Dorsolateral prefrontal cortex (tissue), 120 donors: ENCODE measurements at regions of chr5 and their contacts with region 1.

Region 1: DNA sequence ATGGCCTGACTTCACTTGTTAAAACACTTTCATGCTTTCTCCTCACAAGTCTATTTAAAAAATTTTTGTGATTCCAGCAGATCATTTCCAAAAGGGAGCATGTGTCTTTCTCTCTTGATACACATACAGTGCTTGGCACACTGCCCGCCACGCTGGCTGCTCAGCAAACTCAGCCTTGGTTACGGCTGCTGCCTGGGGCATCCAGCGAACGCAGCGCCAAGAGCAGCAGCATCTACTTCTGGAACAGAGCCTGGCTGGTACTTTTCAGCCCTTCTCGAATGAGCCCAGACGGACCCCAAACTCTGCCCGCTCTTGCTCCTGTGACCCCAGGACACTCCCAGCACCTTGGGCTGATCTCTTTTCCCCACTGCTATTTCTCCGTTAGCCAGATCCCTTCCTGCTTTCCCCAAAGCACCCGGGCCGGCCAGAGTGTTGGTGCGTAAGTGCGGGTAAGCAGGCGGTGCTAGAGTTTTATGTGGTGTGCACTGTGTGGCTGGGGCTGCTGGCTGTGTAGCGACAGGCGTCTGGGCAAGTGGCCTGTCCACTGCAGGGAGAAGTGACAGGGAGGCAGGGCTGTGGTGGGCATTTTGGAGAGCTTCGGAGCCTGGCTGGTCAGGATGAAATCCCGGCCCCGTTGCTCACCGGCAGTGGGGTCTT is 73.2 kb downstream of the SH3PXD2B start:
- DNase-seq: peak; percentile 84 to 94 (median 90)
- H3K4me3 ChIP-seq: peak overlapping the region in 46 of 59 donors; percentile 2 to 57 (median 36)
- H3K27ac ChIP-seq: peak overlapping the region in 55 of 59 donors; percentile 5 to 84 (median 65)
- H3K27me3 ChIP-seq: no peaks in the 10 kb centered on the region
- CTCF ChIP-seq: peak in 7 of 56 donors; percentile 11 to 35 (median 20)

Region 2: GRCh38 chr5:172194985-172195774 is 185.9 kb before region 1 on chr5:
- intact Hi-C with region 1: no loop called
- DNase-seq: no peak
- H3K4me3 ChIP-seq: no peak overlapping the region
- H3K27ac ChIP-seq: no peak overlapping the region
- H3K27me3 ChIP-seq: no peaks in the 10 kb centered on the region
- CTCF ChIP-seq: no peak

Region 3: DNA sequence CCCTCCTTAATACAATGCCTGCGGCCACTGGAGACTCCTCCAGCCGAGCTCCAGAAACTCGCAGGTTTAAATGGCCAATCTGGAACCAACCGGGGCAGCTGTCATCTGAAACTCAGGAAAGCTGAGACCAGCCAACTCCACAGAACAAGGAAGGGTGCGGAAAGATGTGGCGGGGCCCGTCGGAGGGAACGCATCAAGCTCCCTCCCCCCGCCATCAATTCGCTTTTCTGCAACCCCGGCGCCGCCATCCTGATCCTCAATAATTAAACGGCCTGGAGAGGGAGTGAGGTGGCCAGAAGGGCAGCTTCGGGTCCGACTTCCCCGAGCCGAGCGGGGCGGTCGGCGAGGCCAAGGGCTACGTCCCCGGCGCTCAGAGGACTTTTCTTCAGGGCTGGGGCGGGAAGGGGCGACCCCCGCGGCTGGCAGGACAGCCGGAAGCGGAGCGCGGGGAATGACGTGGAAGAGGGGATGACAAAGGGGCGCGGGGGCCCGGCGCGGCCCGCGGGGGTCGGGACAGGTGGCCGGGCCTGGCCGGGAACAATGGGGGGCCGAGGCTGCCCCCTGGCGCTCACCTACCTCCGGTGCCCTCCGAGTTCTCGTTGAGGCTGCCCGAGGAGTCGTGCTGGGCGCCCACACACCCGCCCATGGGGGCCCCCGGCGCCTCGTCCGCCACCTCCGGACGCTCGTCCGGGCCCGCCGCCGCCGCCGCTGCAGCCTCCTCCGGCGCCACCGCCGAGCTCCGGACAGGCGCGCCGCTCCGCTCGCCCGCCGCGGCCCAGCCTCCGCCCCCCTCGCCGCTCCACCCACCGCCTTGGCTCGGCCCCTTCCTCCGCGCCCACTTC is 97.9 kb before region 1 on chr5 and contains the start of gene UBTD2:
- intact Hi-C with region 1: no loop called
- DNase-seq: peak; percentile 28 to 84 (median 66)
- H3K4me3 ChIP-seq: peak within 1 kb of the TSS; percentile 60 to 96 (median 88)
- H3K27ac ChIP-seq: peak within 1 kb of the TSS in 56 of 59 donors; percentile 32 to 91 (median 76)
- H3K27me3 ChIP-seq: no peaks in the 10 kb centered on the region
- CTCF ChIP-seq: peak in 50 of 56 donors; percentile 2 to 72 (median 46)
- total RNA-seq, gene UBTD2: 7.7 to 14.5 (median 9.9) TPM

Region 4: DNA sequence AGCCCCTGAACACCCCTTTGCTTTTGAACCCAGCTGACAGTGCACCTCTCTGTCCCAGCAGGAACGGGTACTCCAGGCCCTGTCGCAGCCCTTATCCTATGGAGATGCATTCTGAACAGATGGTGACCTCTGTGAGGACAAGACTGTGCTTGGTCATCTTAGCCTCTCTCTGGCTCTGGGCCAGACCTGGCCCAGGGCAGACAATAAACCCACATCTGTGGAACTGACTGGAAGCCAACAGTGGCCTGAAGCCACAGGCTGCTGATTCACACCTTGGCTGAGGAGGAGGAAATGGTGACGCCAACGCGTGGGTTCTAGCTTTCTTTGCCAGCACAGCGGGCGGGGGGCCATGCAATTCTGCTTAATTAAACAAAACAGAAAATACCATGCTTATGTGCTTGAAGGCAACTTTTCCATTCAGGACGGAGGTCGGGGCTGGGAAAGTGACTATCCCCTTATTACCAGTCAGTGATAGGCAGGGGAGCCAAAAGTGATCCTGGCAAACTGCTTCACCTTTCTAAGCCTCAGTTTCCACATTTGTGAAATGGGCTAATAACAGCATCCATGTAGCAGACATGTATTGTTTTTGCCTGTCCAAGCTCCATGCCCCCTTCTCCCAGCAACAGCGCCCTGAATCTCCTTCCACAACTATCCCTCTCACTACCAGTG is 62.5 kb after region 1 on chr5:
- intact Hi-C with region 1: no loop called
- DNase-seq: peak in 6 of 10 donors; percentile 66 to 81 (median 76)
- H3K4me3 ChIP-seq: no peak overlapping the region
- H3K27ac ChIP-seq: peak overlapping the region in 51 of 59 donors; percentile 2 to 97 (median 49)
- H3K27me3 ChIP-seq: no peaks in the 10 kb centered on the region
- CTCF ChIP-seq: no peak

Region 5: GRCh38 chr5:172454358-172455086 is 73.4 kb after region 1 on chr5 and contains the start of gene SH3PXD2B:
- intact Hi-C with region 1: loop called in 1 of 2 experiments (anchors 5 kb)
- DNase-seq: peak in 6 of 10 donors; percentile 46 to 79 (median 62)
- H3K4me3 ChIP-seq: peak within 1 kb of the TSS; percentile 61 to 94 (median 79)
- H3K27ac ChIP-seq: peak within 1 kb of the TSS; percentile 29 to 95 (median 86)
- H3K27me3 ChIP-seq: no peaks in the 10 kb centered on the region
- CTCF ChIP-seq: no peak
- total RNA-seq, gene SH3PXD2B: 9.2 to 63.2 (median 19.7) TPM

Region 6: DNA sequence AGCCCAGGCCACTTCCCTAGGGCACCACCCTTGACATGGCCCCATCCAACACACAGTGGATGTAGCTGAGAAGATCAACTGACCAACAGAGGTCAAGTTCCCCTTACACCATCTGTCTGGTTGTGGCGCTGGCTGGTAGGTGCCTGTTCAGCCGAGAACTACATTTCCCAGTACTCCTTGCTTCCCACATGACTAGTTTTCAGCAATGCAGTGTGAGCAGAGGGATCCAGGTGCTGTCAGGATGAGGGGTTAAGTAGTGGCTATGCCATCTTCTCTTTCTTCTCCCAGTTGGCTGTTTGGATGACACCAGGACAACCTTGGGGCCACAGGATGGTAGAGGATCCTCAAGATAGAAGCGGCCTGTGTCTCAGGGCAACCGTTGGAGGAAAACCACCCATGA is 121.9 kb after region 1 on chr5:
- intact Hi-C with region 1: no loop called
- DNase-seq: peak in 2 of 10 donors; percentile 6 to 12
- H3K4me3 ChIP-seq: no peak overlapping the region
- H3K27ac ChIP-seq: no peak overlapping the region
- H3K27me3 ChIP-seq: no peaks in the 10 kb centered on the region
- CTCF ChIP-seq: no peak